ENCODE measurements at regions of chr19 and their contacts with region 1.

Region 1: GRCh38 chr19:1417681-1418495 is 10.5 kb downstream of the DAZAP1 start:
- DNase-seq: no peak
- H3K27ac ChIP-seq: peak overlapping the region; percentile 96
- CTCF ChIP-seq: no peak

Region 2: DNA sequence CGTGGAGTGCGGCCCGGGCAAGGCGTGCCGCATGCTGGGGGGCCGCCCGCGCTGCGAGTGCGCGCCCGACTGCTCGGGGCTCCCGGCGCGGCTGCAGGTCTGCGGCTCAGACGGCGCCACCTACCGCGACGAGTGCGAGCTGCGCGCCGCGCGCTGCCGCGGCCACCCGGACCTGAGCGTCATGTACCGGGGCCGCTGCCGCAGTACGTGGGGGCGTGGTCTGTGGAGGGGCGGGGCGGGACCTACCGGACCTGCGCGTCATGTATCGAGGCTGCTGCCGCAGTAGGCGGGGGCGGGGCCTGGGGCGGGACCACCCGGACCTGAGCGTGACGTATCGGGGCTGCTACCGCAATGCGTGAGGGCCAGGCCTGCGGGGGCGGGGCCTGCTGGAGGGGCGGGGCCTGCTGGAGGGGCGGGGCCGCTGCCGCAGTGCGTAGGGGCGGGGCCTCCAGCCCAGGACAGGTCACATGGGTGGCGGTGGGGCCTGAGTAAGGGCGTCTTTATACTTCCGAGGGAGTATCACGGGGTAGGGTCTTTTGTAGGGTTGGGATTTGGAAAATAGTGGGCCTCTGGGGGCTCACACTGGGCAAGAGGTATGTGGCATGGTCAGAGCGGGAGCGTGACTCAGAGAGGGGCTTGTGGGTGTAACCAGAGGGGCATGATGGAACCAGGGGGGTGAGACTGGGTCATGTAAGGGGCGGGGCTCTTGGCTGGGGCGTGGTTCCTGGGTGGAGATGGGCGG is 737.4 kb before region 1 on chr19:
- CTCF ChIA-PET with region 1: no interaction called
- POLR2A ChIA-PET with region 1: interaction called, 17 read pairs
- DNase-seq: peak; percentile 96
- H3K27ac ChIP-seq: peak overlapping the region; percentile 98
- CTCF ChIP-seq: peak; percentile 60

Region 3: DNA sequence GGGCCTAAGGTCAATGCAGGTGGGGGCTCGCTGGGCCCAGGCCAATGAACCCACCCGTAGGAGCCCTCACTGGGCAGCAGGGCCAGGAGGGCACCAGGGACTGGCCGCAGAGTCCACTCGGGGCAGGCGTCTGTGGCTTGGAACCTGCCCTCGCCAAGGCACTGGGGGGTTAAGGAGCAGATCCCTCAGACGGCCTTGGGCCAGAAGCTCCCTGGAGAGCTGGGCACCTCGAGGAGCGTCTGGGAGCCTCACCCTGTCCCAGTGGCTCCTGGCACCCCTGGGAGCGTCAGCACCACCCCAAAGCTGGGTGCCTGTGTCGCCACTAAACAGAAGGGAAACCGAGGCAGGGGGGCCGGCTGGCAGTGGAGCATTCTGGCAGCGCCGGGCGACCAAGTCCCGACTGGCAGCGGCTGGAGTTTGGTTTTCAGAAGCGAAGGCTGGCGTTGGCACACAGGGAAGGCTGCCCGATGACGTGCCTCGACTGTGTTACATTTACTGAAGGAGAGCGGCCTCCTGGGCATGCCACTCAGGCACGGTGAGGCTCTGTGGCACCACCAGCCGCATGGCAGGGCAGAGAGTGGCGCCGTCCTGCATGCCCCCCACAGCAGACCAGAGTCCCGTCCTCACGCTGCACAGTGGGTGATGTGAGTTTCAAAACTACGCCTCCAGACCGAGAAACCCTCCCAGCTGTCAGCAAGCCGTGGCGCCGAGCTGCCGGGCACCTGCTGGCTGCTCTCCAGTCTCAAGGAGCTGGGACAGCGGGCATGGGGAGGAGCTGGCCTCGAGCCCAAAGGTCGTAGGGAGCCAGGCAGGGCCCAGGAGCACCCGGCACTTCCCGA is 159.4 kb after region 1 on chr19:
- CTCF ChIA-PET with region 1: no interaction called
- POLR2A ChIA-PET with region 1: no interaction called
- DNase-seq: no peak
- H3K27ac ChIP-seq: peak overlapping the region; percentile 31
- CTCF ChIP-seq: no peak